ENCODE measurements at regions of chr5 and their contacts with region 1.

Region 1: DNA sequence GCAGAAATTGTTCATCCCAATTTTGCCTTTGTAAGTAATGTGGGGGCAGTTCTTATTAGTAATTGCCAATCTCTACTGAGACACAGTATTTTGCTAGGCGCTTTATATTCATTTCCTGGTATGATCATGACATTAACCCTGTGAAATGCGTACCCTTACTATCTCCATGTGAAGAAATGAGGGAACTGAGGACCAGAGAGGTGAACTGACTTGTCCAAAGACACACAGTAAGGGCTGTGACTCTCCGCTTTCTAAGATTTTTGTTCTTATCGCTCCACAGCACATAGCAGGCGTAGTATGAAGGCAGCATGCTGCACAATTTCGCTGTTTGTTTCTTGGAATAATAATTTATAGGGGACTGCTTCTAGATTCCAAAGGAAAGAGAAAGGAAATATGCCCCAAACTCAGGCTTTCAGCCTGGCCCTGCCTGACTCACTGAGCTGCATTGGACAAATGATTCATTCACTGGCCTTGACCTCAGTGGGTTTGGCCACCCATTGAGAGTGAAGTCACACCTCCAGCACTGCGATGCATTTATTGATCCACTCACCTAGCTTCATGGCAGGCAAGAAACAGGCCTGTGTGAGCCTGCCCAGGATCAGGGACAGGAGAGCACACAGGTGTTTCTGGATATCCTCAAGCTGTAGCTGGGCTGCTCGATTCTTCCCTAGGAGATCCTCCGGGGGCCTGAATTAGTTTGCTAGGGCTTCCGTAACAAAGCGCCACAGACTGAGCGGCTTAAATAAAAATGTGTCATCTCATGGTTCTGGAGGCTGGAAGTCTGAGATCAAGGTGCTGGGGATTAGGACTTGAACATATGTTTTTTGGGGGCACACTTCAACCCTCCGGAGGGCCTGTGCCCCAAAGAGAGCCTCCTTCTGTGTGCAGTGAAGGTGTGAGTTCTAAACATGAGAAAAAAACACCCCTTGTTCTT is 7.2 kb upstream of the DUSP1 start:
- DNase-seq: no peak
- ATAC-seq: peak; percentile 6
- H3K4me3 Mint-ChIP-seq: peak overlapping the region; percentile 63
- H3K27ac Mint-ChIP-seq: peak overlapping the region; percentile 97
- H3K4me1 Mint-ChIP-seq: peaks cover 39% of the 10 kb centered on the region
- H3K27me3 Mint-ChIP-seq: no peaks in the 10 kb centered on the region
- CTCF ChIP-seq: no peak

Region 2: GRCh38 chr5:172788771-172789686 is 10.9 kb after region 1 on chr5:
- CTCF ChIA-PET with region 1: no interaction called
- POLR2A ChIA-PET with region 1: interaction called, 10 read pairs
- intact Hi-C with region 1: loop called (anchors 1 kb)
- DNase-seq: no peak
- ATAC-seq: peak; percentile 18
- H3K4me3 Mint-ChIP-seq: no peak overlapping the region
- H3K27ac Mint-ChIP-seq: no peak overlapping the region
- H3K4me1 Mint-ChIP-seq: peaks cover 14% of the 10 kb centered on the region
- H3K27me3 Mint-ChIP-seq: no peaks in the 10 kb centered on the region
- CTCF ChIP-seq: no peak

Region 3: GRCh38 chr5:172910828-172911627 is 132.9 kb after region 1 on chr5:
- CTCF ChIA-PET with region 1: no interaction called
- POLR2A ChIA-PET with region 1: no interaction called
- intact Hi-C with region 1: no loop called
- DNase-seq: peak; percentile 23
- ATAC-seq: peak; percentile 76
- H3K4me3 Mint-ChIP-seq: peak overlapping the region; percentile 25
- H3K27ac Mint-ChIP-seq: peak overlapping the region; percentile 86
- H3K4me1 Mint-ChIP-seq: peaks cover 25% of the 10 kb centered on the region
- H3K27me3 Mint-ChIP-seq: no peaks in the 10 kb centered on the region
- CTCF ChIP-seq: no peak